Activated CD8-positive, alpha-beta T cell treated with anti-CD3 and anti-CD28 coated beads, Interleukin-2, amount 10 ng/mL, durations not matched to agents 7 days and 5 days (primary cell): ENCODE measurements at regions of chr4 and their contacts with region 1.

Region 1: GRCh38 chr4:10164877-10165283 is 48.3 kb upstream of the WDR1 start:
- DNase-seq: peak; percentile 31
- ATAC-seq: no peak
- H3K4me3 Mint-ChIP-seq: no peak overlapping the region
- H3K27ac Mint-ChIP-seq: no peak overlapping the region
- H3K4me1 Mint-ChIP-seq: peaks cover 47% of the 10 kb centered on the region
- H3K27me3 Mint-ChIP-seq: peaks cover 2% of the 10 kb centered on the region

Region 2: GRCh38 chr4:10006231-10006600 is 158.7 kb before region 1 on chr4:
- CTCF ChIA-PET with region 1: no interaction called
- POLR2A ChIA-PET with region 1: no interaction called
- DNase-seq: no peak
- ATAC-seq: no peak
- H3K4me3 Mint-ChIP-seq: no peak overlapping the region
- H3K27ac Mint-ChIP-seq: no peak overlapping the region
- H3K4me1 Mint-ChIP-seq: peaks cover 79% of the 10 kb centered on the region
- H3K27me3 Mint-ChIP-seq: no peaks in the 10 kb centered on the region

Region 3: DNA sequence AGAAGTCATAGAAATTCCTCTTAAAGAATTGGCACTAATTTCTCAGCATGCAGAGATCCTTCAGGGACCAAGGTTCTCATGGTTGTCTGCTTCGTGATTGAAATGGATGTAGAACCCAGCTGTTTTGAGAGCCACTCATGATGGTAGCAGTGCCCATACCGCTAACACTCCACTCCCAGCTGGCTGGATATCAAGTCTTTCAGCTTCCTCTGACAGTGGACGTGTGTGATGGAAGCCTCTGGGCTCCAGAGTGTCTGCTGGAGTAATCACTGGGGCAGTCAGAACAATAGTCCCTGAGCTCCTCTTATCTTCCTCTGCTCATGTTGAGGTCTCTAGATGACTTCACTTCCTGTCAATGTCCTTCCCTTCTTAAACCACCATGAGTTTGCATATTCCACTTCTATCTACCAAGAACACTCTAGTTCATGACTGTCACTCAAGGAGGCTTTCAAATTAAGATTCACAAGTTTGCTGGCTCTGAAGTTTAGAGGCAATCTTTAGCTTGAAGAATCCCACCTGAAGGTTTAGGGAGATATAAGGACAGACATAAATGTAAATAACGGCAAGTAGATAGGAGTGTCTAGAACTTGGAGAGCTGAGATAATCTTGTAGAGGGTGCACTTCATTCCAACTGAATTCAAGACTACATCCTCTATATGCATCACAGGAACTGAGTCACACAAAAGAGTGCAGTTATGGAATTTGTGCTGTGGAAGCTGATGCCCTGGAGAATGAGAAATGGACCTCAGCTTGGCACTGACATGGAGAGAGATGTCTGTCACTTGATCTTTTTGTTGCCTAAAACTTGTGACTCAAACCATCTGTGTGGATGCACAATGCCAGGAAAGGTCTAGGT is 16.3 kb after region 1 on chr4:
- CTCF ChIA-PET with region 1: interaction called, 43 read pairs
- POLR2A ChIA-PET with region 1: no interaction called
- DNase-seq: peak; percentile 66
- ATAC-seq: peak; percentile 83
- H3K4me3 Mint-ChIP-seq: peak overlapping the region; percentile 6
- H3K27ac Mint-ChIP-seq: peak overlapping the region; percentile 93
- H3K4me1 Mint-ChIP-seq: peaks cover 51% of the 10 kb centered on the region
- H3K27me3 Mint-ChIP-seq: no peaks in the 10 kb centered on the region

Region 4: GRCh38 chr4:10186228-10187214 is 21.6 kb after region 1 on chr4:
- CTCF ChIA-PET with region 1: interaction called, 43 read pairs
- POLR2A ChIA-PET with region 1: no interaction called
- DNase-seq: no peak
- ATAC-seq: no peak
- H3K4me3 Mint-ChIP-seq: no peak overlapping the region
- H3K27ac Mint-ChIP-seq: no peak overlapping the region
- H3K4me1 Mint-ChIP-seq: peaks cover 44% of the 10 kb centered on the region
- H3K27me3 Mint-ChIP-seq: peaks cover 4% of the 10 kb centered on the region

Region 5: GRCh38 chr4:10535912-10536311 is 371.0 kb after region 1 on chr4:
- CTCF ChIA-PET with region 1: interaction called, 51 read pairs
- POLR2A ChIA-PET with region 1: no interaction called
- DNase-seq: no peak
- ATAC-seq: no peak
- H3K4me3 Mint-ChIP-seq: no peak overlapping the region
- H3K27ac Mint-ChIP-seq: no peak overlapping the region
- H3K4me1 Mint-ChIP-seq: no peaks in the 10 kb centered on the region
- H3K27me3 Mint-ChIP-seq: peaks cover 14% of the 10 kb centered on the region